ENCODE measurements at regions of chr3 and their contacts with region 1.

Region 1: DNA sequence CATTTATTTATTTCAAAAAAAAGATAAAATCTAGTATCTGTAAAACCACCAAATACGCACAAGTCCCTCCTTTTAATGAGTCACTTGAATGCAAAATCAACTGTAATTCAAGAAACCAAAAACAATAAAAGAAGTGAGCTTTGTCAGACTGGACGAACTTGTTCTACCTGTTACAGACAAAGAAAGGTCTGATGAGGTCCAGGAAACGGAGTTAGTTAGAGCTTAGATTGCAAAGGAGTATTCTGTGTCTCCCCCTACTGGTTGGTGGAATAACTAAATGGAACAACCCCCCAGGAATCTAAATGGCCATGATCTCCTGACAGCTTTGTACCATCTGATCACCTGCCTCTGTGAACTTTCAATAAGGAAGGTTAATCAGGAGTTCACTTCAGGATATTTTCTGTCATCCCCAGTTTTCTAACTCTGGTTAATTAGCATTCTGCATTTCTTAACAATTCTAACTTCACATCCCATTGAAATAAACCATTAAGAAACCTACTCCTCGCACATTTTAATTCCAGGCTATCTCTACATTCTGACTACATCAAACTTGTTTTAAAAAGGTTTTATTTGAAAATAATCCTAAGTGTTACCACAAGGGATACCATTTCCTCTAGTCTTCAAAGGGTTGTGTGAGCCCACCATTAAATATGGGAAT is 333.0 kb upstream of the SATB1 start:
- DNase-seq: peak in 7 of 9 donors; percentile 69 to 85 (median 79)
- ATAC-seq: peak; percentile 98
- H3K4me3 ChIP-seq: no peak overlapping the region
- H3K4me3 Mint-ChIP-seq: peak overlapping the region in 6 of 10 donors; percentile 2 to 45 (median 12)
- H3K27ac ChIP-seq: peak overlapping the region; percentile 15
- H3K27ac Mint-ChIP-seq: peak overlapping the region in 8 of 9 donors; percentile 61 to 88 (median 74)
- H3K4me1 ChIP-seq: peaks cover 4 to 29% of the 10 kb centered on the region in 2 donors
- H3K4me1 Mint-ChIP-seq: peaks cover 17 to 55% (median 45%) of the 10 kb centered on the region in 7 donors
- H3K27me3 ChIP-seq: no peaks in the 10 kb centered on the region
- H3K27me3 Mint-ChIP-seq: no peaks in the 10 kb centered on the region

Region 2: DNA sequence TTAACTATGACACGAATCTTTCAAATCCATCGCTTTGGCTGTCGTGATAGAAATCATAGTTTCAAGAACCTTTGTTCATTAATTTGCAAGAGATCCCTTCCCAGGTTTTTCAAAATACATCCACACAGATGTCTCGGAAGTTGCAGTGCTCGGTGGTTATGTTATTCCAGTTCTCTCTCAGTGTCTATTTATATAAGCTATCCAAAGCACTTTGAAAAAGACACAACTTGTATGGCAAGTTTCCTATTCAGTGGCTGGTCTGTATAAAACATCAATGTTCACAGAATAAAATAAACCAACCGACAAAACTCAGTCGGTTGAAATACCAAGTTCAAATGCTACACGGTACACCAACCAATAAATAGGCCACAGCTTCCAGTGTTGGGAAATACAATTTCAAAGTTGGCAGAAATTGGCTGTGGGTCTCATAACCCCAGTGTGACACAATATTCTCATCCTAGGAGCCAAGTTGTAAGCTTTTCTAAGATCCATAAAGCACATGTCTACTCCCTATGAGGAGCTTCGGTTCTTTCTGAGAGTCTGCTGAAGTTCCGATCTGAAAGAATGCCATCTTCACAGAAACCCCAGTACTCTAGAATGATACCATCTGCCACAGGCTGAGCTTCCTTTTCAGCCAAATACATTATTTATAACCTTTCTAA is 356.7 kb before region 1 on chr3:
- CTCF ChIA-PET with region 1: interaction called, 5 read pairs
- POLR2A ChIA-PET with region 1: interaction called, 4 read pairs
- intact Hi-C with region 1: loop called in 1 of 2 experiments (anchors 5 kb)
- DNase-seq: no peak
- ATAC-seq: peak; percentile 53
- H3K4me3 ChIP-seq: peak overlapping the region; percentile 3
- H3K4me3 Mint-ChIP-seq: peak overlapping the region; percentile 35 to 85 (median 80)
- H3K27ac ChIP-seq: peak overlapping the region; percentile 64
- H3K27ac Mint-ChIP-seq: peak overlapping the region; percentile 78 to 96 (median 87)
- H3K4me1 ChIP-seq: peaks cover 0 to 92% of the 10 kb centered on the region in 2 donors
- H3K4me1 Mint-ChIP-seq: peaks cover 51 to 100% (median 100%) of the 10 kb centered on the region in 7 donors
- H3K27me3 ChIP-seq: no peaks in the 10 kb centered on the region
- H3K27me3 Mint-ChIP-seq: no peaks in the 10 kb centered on the region

Region 3: DNA sequence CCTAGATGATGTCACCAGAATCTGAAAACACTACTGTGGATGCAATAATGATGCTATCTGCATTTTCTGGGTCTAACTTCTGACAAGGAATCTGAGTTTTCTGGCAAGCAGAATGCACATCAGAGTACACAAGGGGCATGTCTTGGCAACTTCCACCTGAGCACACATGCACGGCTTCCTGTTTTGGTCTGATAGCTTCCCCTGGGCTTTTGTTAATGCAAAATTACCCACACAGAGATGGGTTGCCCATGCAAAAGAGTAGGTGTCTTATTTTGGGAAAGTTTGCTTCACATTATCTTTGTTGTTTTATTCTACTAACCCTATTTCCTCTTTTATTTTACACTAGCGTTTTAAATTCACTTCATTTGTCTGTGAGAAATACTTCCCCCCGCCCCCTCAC is 258.9 kb before region 1 on chr3:
- CTCF ChIA-PET with region 1: no interaction called
- POLR2A ChIA-PET with region 1: no interaction called
- intact Hi-C with region 1: loop called in 1 of 2 experiments (anchors 2 kb)
- DNase-seq: peak in 7 of 9 donors; percentile 4 to 47 (median 30)
- ATAC-seq: peak; percentile 78
- H3K4me3 ChIP-seq: no peak overlapping the region
- H3K4me3 Mint-ChIP-seq: peak overlapping the region; percentile 18 to 74 (median 62)
- H3K27ac ChIP-seq: peak overlapping the region; percentile 6
- H3K27ac Mint-ChIP-seq: peak overlapping the region; percentile 14 to 90 (median 73)
- H3K4me1 ChIP-seq: peaks cover 7 to 30% of the 10 kb centered on the region in 2 donors
- H3K4me1 Mint-ChIP-seq: peaks cover 21 to 57% (median 49%) of the 10 kb centered on the region in 7 donors
- H3K27me3 ChIP-seq: no peaks in the 10 kb centered on the region
- H3K27me3 Mint-ChIP-seq: no peaks in the 10 kb centered on the region

Region 4: GRCh38 chr3:18657858-18658820 is 100.0 kb before region 1 on chr3:
- CTCF ChIA-PET with region 1: no interaction called
- POLR2A ChIA-PET with region 1: no interaction called
- intact Hi-C with region 1: loop called in 1 of 2 experiments (anchors 5 kb)
- DNase-seq: peak in 4 of 9 donors; percentile 14 to 35 (median 26)
- ATAC-seq: peak; percentile 56
- H3K4me3 ChIP-seq: no peak overlapping the region
- H3K4me3 Mint-ChIP-seq: peak overlapping the region in 9 of 10 donors; percentile 7 to 53 (median 30)
- H3K27ac ChIP-seq: no peak overlapping the region
- H3K27ac Mint-ChIP-seq: peak overlapping the region in 8 of 9 donors; percentile 1 to 74 (median 34)
- H3K4me1 ChIP-seq: peaks cover 6 to 21% of the 10 kb centered on the region in 2 donors
- H3K4me1 Mint-ChIP-seq: peaks cover 24 to 66% (median 39%) of the 10 kb centered on the region in 7 donors
- H3K27me3 ChIP-seq: no peaks in the 10 kb centered on the region
- H3K27me3 Mint-ChIP-seq: no peaks in the 10 kb centered on the region

Region 5: GRCh38 chr3:18725668-18726407 is 32.3 kb before region 1 on chr3:
- CTCF ChIA-PET with region 1: interaction called, 21 read pairs
- POLR2A ChIA-PET with region 1: interaction called, 6 read pairs
- intact Hi-C with region 1: loop called in 1 of 2 experiments (anchors 1 kb)
- DNase-seq: peak in 8 of 9 donors; percentile 50 to 76 (median 68)
- ATAC-seq: peak; percentile 80
- H3K4me3 ChIP-seq: peak overlapping the region; percentile 42
- H3K4me3 Mint-ChIP-seq: peak overlapping the region; percentile 57 to 88 (median 75)
- H3K27ac ChIP-seq: peak overlapping the region; percentile 74
- H3K27ac Mint-ChIP-seq: peak overlapping the region; percentile 95 to 100 (median 98)
- H3K4me1 ChIP-seq: peaks cover 54 to 61% of the 10 kb centered on the region in 2 donors
- H3K4me1 Mint-ChIP-seq: peaks cover 50 to 88% (median 80%) of the 10 kb centered on the region in 7 donors
- H3K27me3 ChIP-seq: no peaks in the 10 kb centered on the region
- H3K27me3 Mint-ChIP-seq: no peaks in the 10 kb centered on the region

Region 6: GRCh38 chr3:18787441-18787840 is 29.3 kb after region 1 on chr3:
- CTCF ChIA-PET with region 1: interaction called, 4 read pairs
- POLR2A ChIA-PET with region 1: interaction called, 4 read pairs
- intact Hi-C with region 1: loop called in 1 of 2 experiments (anchors 2 kb)
- DNase-seq: peak in 2 of 9 donors; percentile 16 to 31
- ATAC-seq: no peak
- H3K4me3 ChIP-seq: no peak overlapping the region
- H3K4me3 Mint-ChIP-seq: no peak overlapping the region
- H3K27ac ChIP-seq: no peak overlapping the region
- H3K27ac Mint-ChIP-seq: peak overlapping the region in 2 of 9 donors; percentile 44 to 48
- H3K4me1 ChIP-seq: no peaks in the 10 kb centered on the region
- H3K4me1 Mint-ChIP-seq: peaks cover under 1 to 34% (median 10%) of the 10 kb centered on the region in 7 donors
- H3K27me3 ChIP-seq: no peaks in the 10 kb centered on the region
- H3K27me3 Mint-ChIP-seq: no peaks in the 10 kb centered on the region